ENCODE measurements at regions of chr5 and their contacts with region 1.

Region 1: DNA sequence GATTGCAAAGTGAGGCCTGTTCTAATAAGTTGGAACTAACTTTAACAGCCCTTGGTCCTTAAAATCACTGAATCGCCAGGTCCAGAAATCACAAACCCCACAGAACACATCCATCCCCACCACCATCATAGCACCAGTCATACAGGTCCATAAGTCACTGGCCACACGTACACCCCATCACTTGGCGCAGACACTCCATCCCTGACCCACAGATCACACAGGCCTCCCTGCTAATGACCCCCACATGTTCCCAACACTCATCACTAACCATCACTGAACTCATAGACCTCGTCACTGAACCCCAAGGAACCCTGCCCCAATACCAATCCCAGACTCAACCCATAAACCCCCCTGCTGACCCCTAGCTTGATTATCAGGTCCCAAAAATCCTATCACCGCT is 41.2 kb upstream of the ZNF300 start:
- DNase-seq: no peak
- ATAC-seq: no peak
- H3K4me3 ChIP-seq: no peak overlapping the region
- H3K27ac ChIP-seq: no peak overlapping the region
- H3K4me1 ChIP-seq: no peaks in the 10 kb centered on the region
- H3K27me3 ChIP-seq: no peaks in the 10 kb centered on the region
- CTCF ChIP-seq: no peak
- EP300 ChIP-seq: no peak
- POLR2A ChIP-seq: no peak
- RAD21 ChIP-seq: no peak

Region 2: DNA sequence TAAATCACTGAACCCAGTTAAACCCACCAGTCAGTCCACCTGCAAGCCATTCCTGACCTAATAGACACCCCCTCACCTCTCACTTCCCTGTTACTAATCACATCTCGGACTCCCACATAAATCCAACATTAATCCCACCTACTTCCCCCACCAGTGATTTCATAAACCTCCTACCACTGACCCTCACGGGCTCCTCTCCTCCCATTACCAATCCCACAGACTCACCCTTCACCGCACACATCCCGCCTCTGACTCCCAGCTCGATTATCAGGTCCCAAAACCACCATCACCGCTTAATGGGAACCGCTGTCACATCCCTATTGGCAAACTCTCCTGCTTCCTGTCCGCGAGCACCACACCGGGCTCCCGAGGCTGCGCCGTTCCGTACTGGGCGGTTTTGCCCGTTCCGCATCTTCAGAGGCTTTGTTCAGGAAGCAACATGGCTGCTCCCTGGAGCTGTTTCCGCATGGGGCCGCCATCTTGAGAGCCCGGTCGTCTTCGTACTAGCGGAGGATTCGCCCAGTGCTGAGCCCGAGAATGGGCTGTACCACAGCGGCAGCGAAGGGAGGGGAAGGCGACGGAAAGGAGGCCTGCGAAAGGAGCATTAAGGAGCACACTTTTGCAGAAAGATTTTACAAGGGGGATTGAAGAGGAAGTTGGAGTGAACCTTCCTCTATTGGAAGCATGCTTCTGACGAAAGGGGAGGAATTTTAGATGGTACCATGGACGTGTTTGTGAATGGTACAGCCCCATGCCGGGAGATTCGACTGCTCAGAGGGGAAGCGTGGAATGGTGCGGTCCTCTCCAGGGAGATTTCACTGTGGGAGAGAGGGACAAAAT is 41.2 kb before region 1 on chr5 and contains the start of gene ZNF300:
- CTCF ChIA-PET with region 1: no interaction called
- POLR2A ChIA-PET with region 1: no interaction called
- in situ Hi-C with region 1: no loop called
- intact Hi-C with region 1: loop called (anchors 1 kb)
- DNase-seq: peak; percentile 85
- ATAC-seq: peak; percentile 100
- H3K4me3 ChIP-seq: peak within 1 kb of the TSS; percentile 63 to 86 (median 69)
- H3K27ac ChIP-seq: peak within 1 kb of the TSS; percentile 95
- H3K4me1 ChIP-seq: peaks cover 15% of the 10 kb centered on the region
- H3K27me3 ChIP-seq: no peaks in the 10 kb centered on the region; a peak in 2 of 5 replicates
- CTCF ChIP-seq: no peak; the same call in 1 of the 2 replicates
- EP300 ChIP-seq: 0 out of 4 replicates have a peak, but pooled peaks of 1 of the 2 experiments have one; percentile 20
- POLR2A ChIP-seq: peak in 1 of 2 experiments; percentile 89; a peak in 2 of 4 replicates
- RAD21 ChIP-seq: no peak
- total RNA-seq, gene ZNF300: 5.3 and 6.8 TPM in 2 replicates

Region 3: DNA sequence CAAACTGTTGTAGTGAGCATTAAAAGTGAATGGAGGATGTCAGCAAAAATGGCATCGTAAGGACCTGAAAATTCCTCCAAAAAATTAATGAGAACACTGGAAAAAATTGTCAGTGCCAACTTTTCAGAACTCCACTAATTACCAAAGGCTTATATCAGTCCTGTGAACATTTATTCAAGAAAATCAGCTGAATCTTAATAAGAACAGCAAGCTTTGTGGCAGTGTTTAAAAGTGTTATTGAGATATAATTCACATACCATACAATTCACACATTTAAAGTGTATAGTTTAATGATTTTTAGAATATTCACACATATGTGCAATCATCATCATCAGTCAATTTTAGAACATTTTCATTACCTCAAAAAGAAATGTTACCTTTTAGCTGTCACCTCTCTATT is 883.4 kb after region 1 on chr5:
- CTCF ChIA-PET with region 1: no interaction called
- POLR2A ChIA-PET with region 1: no interaction called
- in situ Hi-C with region 1: no loop called
- intact Hi-C with region 1: no loop called
- DNase-seq: no peak
- ATAC-seq: no peak
- H3K4me3 ChIP-seq: no peak overlapping the region
- H3K27ac ChIP-seq: no peak overlapping the region
- H3K4me1 ChIP-seq: no peaks in the 10 kb centered on the region
- H3K27me3 ChIP-seq: no peaks in the 10 kb centered on the region
- CTCF ChIP-seq: no peak
- EP300 ChIP-seq: no peak
- POLR2A ChIP-seq: no peak
- RAD21 ChIP-seq: no peak

Measured in HepG2 (cell line).